Activated CD4-positive, alpha-beta memory T cell treated with anti-CD3 and anti-CD28 coated beads for 36 hours (primary cell): ENCODE measurements at regions of chr1 and their contacts with region 1.

Region 1: DNA sequence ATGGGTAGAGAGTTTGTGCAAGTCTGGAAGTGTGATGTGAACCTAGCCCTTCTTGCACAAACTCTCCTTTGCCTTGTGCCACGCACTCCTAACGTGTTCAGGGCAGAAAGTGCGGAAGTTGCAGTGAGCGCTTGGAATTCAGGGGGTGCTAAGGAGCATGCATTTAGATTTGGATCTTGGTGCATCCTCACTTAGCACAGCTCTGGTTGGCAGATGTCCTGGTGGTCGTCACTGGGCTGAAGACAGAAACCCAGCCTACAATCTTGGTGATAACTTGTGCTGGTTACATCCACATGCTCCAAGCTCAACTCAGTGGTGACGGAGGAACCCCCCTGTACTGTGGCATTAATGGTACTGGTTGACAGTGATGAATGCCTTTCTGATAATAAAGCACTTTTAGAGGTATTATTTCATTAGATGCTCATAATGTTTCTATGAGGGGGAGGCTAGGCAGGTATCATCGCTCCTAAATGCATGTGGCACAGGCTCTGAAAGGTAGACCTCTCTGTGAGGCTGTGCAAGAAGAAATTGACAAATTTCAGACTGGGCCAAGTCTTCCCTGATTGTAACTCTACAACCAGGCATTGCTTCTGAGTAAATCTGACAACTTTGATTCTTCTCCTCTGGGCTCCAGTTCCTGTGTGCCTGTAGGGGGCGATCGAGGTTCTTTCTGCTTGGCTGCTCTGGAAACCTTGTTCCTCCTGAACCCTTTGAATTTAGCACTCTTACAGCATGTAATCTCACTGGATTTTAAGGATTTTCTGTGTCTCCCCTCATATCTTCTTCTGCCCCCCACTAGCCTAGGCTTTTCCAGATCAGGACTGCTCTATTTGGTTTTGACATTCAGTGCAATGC is 40.6 kb downstream of the MAPKAPK2 start:
- DNase-seq: peak; percentile 77
- H3K4me3 Mint-ChIP-seq: no peak overlapping the region
- H3K27ac Mint-ChIP-seq: peak overlapping the region; percentile 33
- H3K4me1 Mint-ChIP-seq: peaks cover 50% of the 10 kb centered on the region
- H3K27me3 Mint-ChIP-seq: no peaks in the 10 kb centered on the region

Region 2: DNA sequence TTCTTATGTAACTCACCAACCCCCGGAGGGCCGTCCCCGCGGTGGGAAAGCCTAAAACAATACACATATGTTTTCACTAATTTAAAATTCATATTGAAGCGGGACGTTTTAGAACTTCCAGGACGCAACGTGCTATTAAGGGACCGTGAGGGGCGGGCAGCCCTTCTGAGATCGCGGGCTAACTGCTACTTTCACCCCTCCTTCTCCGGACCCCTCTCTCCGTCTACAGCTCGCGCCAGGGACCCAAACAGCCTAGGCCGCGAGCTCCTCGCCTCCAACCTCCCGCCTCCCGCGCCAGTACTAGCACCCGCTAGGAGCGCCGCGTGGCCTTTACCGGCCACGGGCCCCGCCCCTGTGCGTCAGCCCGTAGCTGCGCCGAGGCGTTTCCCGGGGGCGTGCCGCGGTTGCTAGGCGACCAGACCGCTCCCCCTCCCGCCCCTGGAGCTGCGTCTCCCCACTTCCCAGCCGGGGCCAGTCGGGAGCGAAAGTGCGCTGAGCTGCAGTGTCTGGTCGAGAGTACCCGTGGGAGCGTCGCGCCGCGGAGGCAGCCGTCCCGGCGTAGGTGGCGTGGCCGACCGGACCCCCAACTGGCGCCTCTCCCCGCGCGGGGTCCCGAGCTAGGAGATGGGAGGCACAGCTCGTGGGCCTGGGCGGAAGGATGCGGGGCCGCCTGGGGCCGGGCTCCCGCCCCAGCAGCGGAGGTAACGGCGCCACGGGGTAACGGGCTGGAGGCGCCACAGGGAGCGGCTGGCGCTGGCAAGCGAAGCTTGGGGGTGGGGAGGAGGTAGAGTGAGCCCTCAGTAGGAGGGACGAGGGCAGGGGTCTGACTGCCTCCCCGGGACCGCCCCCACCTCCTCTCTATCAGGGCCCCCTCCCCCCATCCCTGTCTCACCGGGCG is 90.0 kb before region 1 on chr1 and contains the start of gene DYRK3:
- CTCF ChIA-PET with region 1: interaction called, 14 read pairs
- POLR2A ChIA-PET with region 1: no interaction called
- intact Hi-C with region 1: no loop called
- DNase-seq: peak; percentile 96
- H3K4me3 Mint-ChIP-seq: peak within 1 kb of the TSS; percentile 80
- H3K27ac Mint-ChIP-seq: peak within 1 kb of the TSS; percentile 80
- H3K4me1 Mint-ChIP-seq: peaks cover 25% of the 10 kb centered on the region
- H3K27me3 Mint-ChIP-seq: peaks cover 5% of the 10 kb centered on the region
- total RNA-seq, gene DYRK3: 10.1 to 11.4 TPM

Region 3: DNA sequence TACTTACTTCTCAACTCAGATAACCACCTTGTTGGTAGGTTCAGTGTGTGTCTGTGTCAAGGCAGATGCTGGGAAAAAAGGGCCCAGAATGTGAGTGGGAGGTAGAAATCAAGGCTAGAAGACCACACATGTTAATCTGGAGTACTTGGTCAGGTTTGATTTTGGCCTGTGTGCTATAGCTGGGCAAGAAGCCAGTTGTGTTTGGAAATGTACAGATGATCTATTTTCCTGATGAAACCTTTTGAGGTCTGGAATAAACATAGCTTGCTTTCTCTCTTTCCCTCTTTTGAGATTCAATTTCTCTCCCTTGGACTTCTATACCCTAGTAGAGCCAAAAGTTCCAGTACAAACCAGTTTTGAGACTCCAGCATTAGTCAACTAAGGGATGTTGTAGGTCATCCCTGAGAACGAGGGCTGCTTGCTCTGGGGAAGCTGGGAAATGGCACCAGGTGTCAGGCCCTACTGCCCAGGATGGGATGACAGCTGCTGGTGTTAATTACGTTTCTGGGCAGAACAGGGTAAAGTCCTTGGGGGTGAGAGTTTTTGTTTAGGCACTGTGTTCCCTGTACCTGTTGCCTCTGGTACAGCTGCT is 24.8 kb before region 1 on chr1:
- CTCF ChIA-PET with region 1: interaction called, 21 read pairs
- POLR2A ChIA-PET with region 1: no interaction called
- intact Hi-C with region 1: no loop called
- DNase-seq: no peak
- H3K4me3 Mint-ChIP-seq: no peak overlapping the region
- H3K27ac Mint-ChIP-seq: peak overlapping the region; percentile 43
- H3K4me1 Mint-ChIP-seq: peaks cover 89% of the 10 kb centered on the region
- H3K27me3 Mint-ChIP-seq: no peaks in the 10 kb centered on the region

Region 4: DNA sequence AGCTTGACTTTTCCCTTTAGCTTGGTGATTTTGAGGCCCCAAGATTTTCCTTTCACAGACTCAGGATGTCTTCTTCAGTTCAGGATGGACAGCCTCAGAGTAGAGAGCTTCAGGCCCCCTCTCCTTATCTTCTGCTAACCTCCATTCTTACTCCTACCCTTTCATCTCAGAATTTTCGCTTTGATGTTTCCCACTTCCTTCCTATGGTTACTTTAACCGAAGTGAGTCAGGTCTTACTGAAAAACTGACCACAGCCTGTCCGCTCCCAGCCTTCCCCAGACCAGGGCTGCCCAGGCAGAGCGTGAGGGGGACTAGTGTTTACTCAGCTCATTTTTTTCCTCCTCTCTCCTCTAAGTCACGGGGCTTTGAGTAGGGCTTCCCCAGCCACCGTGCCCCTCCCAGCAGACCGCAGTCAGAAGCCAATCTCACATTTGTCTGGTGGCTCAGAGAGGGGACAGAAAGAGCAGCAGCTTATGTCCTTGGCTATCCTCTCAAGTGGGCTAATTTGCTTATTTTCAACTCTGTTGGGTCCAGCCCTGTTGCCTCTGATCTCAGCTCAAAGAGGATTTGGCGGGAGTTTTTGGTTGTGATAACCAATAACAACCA is 41.0 kb after region 1 on chr1:
- CTCF ChIA-PET with region 1: interaction called, 20 read pairs
- POLR2A ChIA-PET with region 1: no interaction called
- intact Hi-C with region 1: no loop called
- DNase-seq: peak; percentile 84
- H3K4me3 Mint-ChIP-seq: peak overlapping the region; percentile 44
- H3K27ac Mint-ChIP-seq: peak overlapping the region; percentile 68
- H3K4me1 Mint-ChIP-seq: peaks cover 69% of the 10 kb centered on the region
- H3K27me3 Mint-ChIP-seq: peaks cover 6% of the 10 kb centered on the region

Region 5: GRCh38 chr1:206865013-206865671 is 139.8 kb after region 1 on chr1 and contains the start of gene IL20:
- CTCF ChIA-PET with region 1: interaction called, 16 read pairs
- POLR2A ChIA-PET with region 1: no interaction called
- intact Hi-C with region 1: loop called (anchors 5 kb)
- DNase-seq: peak; percentile 93
- H3K4me3 Mint-ChIP-seq: no peak within 1 kb of the TSS
- H3K27ac Mint-ChIP-seq: no peak within 1 kb of the TSS
- H3K4me1 Mint-ChIP-seq: peaks cover 16% of the 10 kb centered on the region
- H3K27me3 Mint-ChIP-seq: peaks cover 10% of the 10 kb centered on the region
- total RNA-seq, gene IL20: not detected

Region 6: DNA sequence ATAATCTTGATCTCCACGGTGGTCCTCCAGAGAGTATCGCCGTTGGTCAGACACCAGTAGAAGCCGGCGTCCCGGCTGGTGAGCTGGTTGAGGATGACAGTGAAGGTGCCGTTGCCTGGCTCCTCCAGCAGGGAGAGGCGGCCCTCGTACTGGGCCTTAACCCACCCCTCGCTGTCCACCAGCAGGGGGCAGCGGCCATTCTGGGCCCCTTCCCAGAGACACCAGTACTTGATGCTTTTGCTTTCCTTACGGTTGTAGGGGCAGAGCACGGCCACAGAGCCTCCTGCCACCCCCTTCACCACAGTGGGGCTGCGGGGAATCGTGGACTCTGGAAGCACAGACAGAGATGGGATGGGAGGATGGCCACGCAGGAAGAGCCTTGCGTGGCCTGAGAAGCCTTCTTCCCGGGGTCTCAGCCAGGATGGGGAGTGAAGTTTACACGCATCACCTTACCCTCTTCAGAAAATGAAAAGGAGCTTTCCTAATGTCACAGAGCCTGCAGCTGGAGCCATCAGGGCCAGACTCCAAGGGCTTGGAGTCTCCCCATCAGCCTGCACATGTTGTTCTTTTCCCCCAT is 210.2 kb after region 1 on chr1:
- CTCF ChIA-PET with region 1: interaction called, 33 read pairs
- POLR2A ChIA-PET with region 1: no interaction called
- intact Hi-C with region 1: no loop called
- DNase-seq: peak; percentile 71
- H3K4me3 Mint-ChIP-seq: no peak overlapping the region
- H3K27ac Mint-ChIP-seq: no peak overlapping the region
- H3K4me1 Mint-ChIP-seq: peaks cover 15% of the 10 kb centered on the region
- H3K27me3 Mint-ChIP-seq: no peaks in the 10 kb centered on the region